HEK293T (cell line): ENCODE measurements at regions of chr12 and their contacts with region 1.

Region 1: GRCh38 chr12:22981711-22982110 is 356.7 kb downstream of the ETNK1 start:
- DNase-seq: no peak

Region 2: GRCh38 chr12:22856178-22856577 is 125.5 kb before region 1 on chr12:
- CTCF ChIA-PET with region 1: interaction called, 11 read pairs
- POLR2A ChIA-PET with region 1: no interaction called
- DNase-seq: peak; percentile 32